ENCODE measurements at regions of chr6 and their contacts with region 1.

Region 1: GRCh38 chr6:42547407-42548329 is 16.2 kb upstream of the UBR2 start:
- DNase-seq: peak; percentile 73 to 85 (median 82)
- H3K4me3 ChIP-seq: peak overlapping the region in 1 of 2 donors; percentile 18
- H3K4me3 Mint-ChIP-seq: peak overlapping the region; percentile 59 to 76 (median 74)
- H3K27ac ChIP-seq: no peak overlapping the region
- H3K27ac Mint-ChIP-seq: peak overlapping the region in 6 of 7 donors; percentile 41 to 93 (median 56)
- H3K4me1 ChIP-seq: peaks cover 9% of the 10 kb centered on the region
- H3K4me1 Mint-ChIP-seq: peaks cover 5 to 13% (median 9%) of the 10 kb centered on the region in 4 donors
- H3K27me3 ChIP-seq: no peaks in the 10 kb centered on the region
- H3K27me3 Mint-ChIP-seq: peaks cover 2 to 4% of the 10 kb centered on the region in 2 donors

Region 2: GRCh38 chr6:42154461-42155198 is 393.0 kb before region 1 on chr6:
- CTCF ChIA-PET with region 1: no interaction called
- POLR2A ChIA-PET with region 1: no interaction called
- intact Hi-C with region 1: no loop called
- DNase-seq: no peak
- H3K4me3 ChIP-seq: no peak overlapping the region
- H3K4me3 Mint-ChIP-seq: no peak overlapping the region
- H3K27ac ChIP-seq: no peak overlapping the region
- H3K27ac Mint-ChIP-seq: no peak overlapping the region
- H3K4me1 ChIP-seq: no peaks in the 10 kb centered on the region
- H3K4me1 Mint-ChIP-seq: no peaks in the 10 kb centered on the region
- H3K27me3 ChIP-seq: no peaks in the 10 kb centered on the region
- H3K27me3 Mint-ChIP-seq: peaks cover 2 to 3% of the 10 kb centered on the region in 2 donors

Region 3: GRCh38 chr6:42166444-42167141 is 381.1 kb before region 1 on chr6:
- CTCF ChIA-PET with region 1: interaction called, 4 read pairs
- POLR2A ChIA-PET with region 1: no interaction called
- intact Hi-C with region 1: loop called (anchors 1 kb)
- DNase-seq: peak; percentile 61 to 73 (median 67)
- H3K4me3 ChIP-seq: no peak overlapping the region
- H3K4me3 Mint-ChIP-seq: no peak overlapping the region
- H3K27ac ChIP-seq: no peak overlapping the region
- H3K27ac Mint-ChIP-seq: peak overlapping the region in 2 of 7 donors; percentile 66 to 87
- H3K4me1 ChIP-seq: no peaks in the 10 kb centered on the region
- H3K4me1 Mint-ChIP-seq: peaks cover 0 to 8% (median 2%) of the 10 kb centered on the region in 4 donors
- H3K27me3 ChIP-seq: no peaks in the 10 kb centered on the region
- H3K27me3 Mint-ChIP-seq: peaks cover 3 to 5% of the 10 kb centered on the region in 2 donors

Region 4: DNA sequence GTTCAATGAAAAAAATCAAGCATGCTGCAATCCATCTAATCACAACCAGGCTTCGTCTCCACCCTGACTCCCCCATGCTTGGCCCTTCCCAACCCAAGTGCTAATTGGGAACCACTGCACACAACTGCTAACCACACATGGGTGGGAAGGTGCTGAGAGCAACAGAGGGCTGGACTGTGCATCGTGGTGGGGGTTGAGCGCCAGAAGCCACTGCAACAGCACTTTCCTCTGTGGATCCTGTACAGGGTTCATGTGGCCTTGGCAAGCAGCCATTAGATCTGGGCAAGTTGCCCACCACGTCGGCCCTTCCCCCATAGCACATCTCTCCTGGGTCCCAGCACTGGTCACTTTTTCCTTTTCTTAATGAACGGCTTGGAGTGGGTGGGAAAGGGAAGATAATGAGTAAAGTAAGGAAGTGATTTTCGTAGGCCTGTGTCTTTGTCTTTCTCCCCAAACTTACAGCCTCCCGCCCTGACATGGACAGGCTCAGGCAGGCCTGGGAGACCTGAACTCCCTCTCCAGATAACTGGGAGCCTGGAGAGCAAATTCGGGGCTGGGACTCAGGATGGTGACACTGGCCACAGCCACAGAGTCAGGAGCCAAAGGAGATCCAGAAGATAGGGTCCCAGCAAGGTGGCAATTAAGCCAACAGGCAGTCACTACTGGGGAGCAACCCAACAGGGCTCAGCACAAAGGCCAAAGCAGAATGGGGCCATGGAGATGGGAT is 295.6 kb before region 1 on chr6:
- CTCF ChIA-PET with region 1: interaction called, 10 read pairs
- POLR2A ChIA-PET with region 1: no interaction called
- intact Hi-C with region 1: no loop called
- DNase-seq: no peak
- H3K4me3 ChIP-seq: no peak overlapping the region
- H3K4me3 Mint-ChIP-seq: peak overlapping the region in 1 of 8 donors; percentile 21
- H3K27ac ChIP-seq: no peak overlapping the region
- H3K27ac Mint-ChIP-seq: peak overlapping the region in 2 of 7 donors; percentile 29 to 57
- H3K4me1 ChIP-seq: no peaks in the 10 kb centered on the region
- H3K4me1 Mint-ChIP-seq: no peaks in the 10 kb centered on the region
- H3K27me3 ChIP-seq: no peaks in the 10 kb centered on the region
- H3K27me3 Mint-ChIP-seq: no peaks in the 10 kb centered on the region

Region 5: GRCh38 chr6:42306439-42307140 is 241.1 kb before region 1 on chr6:
- CTCF ChIA-PET with region 1: interaction called, 62 read pairs
- POLR2A ChIA-PET with region 1: no interaction called
- intact Hi-C with region 1: loop called (anchors 1 kb)
- DNase-seq: no peak
- H3K4me3 ChIP-seq: no peak overlapping the region
- H3K4me3 Mint-ChIP-seq: no peak overlapping the region
- H3K27ac ChIP-seq: no peak overlapping the region
- H3K27ac Mint-ChIP-seq: peak overlapping the region in 2 of 7 donors; percentile 30 to 60
- H3K4me1 ChIP-seq: peaks cover 16% of the 10 kb centered on the region
- H3K4me1 Mint-ChIP-seq: peaks cover 15 to 45% (median 25%) of the 10 kb centered on the region in 4 donors
- H3K27me3 ChIP-seq: no peaks in the 10 kb centered on the region
- H3K27me3 Mint-ChIP-seq: no peaks in the 10 kb centered on the region

Region 6: DNA sequence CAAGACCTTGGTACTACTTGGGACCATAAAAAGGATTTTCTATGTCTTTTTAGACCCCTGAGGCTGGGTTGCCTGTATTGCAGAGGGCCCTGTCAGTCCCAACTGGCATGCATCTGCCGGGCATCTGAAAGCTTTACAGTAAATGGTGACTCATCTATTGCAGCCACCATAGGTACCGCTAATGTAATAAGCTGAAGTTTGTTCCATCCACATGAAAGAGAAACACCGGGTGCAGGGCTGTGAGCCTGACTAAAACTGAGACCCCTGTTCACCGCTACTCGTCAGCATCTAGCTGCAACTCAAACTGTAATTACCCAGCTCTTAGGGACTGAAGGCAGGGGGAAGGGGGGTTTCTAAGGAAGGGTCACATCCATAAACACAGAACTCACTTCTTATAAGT is 145.5 kb before region 1 on chr6:
- CTCF ChIA-PET with region 1: interaction called, 14 read pairs
- POLR2A ChIA-PET with region 1: interaction called, 3 read pairs
- intact Hi-C with region 1: no loop called
- DNase-seq: peak in 1 of 5 donors; percentile 65
- H3K4me3 ChIP-seq: no peak overlapping the region
- H3K4me3 Mint-ChIP-seq: peak overlapping the region; percentile 31 to 77 (median 58)
- H3K27ac ChIP-seq: no peak overlapping the region
- H3K27ac Mint-ChIP-seq: peak overlapping the region; percentile 61 to 95 (median 90)
- H3K4me1 ChIP-seq: peaks cover 86% of the 10 kb centered on the region
- H3K4me1 Mint-ChIP-seq: peaks cover 67 to 97% (median 80%) of the 10 kb centered on the region in 4 donors
- H3K27me3 ChIP-seq: no peaks in the 10 kb centered on the region
- H3K27me3 Mint-ChIP-seq: no peaks in the 10 kb centered on the region

Region 7: GRCh38 chr6:42532038-42532669 is 15.5 kb before region 1 on chr6:
- CTCF ChIA-PET with region 1: interaction called, 62 read pairs
- POLR2A ChIA-PET with region 1: interaction called, 3 read pairs
- intact Hi-C with region 1: no loop called
- DNase-seq: peak in 4 of 5 donors; percentile 36 to 48 (median 42)
- H3K4me3 ChIP-seq: no peak overlapping the region
- H3K4me3 Mint-ChIP-seq: no peak overlapping the region
- H3K27ac ChIP-seq: no peak overlapping the region
- H3K27ac Mint-ChIP-seq: no peak overlapping the region
- H3K4me1 ChIP-seq: no peaks in the 10 kb centered on the region
- H3K4me1 Mint-ChIP-seq: peaks cover 0 to 3% (median 0%) of the 10 kb centered on the region in 4 donors
- H3K27me3 ChIP-seq: no peaks in the 10 kb centered on the region
- H3K27me3 Mint-ChIP-seq: no peaks in the 10 kb centered on the region

Measured in CD4-positive, alpha-beta memory T cell (primary cell).